AG04449 (cell line): ENCODE measurements at regions of chr4 and their contacts with region 1.

Region 1: DNA sequence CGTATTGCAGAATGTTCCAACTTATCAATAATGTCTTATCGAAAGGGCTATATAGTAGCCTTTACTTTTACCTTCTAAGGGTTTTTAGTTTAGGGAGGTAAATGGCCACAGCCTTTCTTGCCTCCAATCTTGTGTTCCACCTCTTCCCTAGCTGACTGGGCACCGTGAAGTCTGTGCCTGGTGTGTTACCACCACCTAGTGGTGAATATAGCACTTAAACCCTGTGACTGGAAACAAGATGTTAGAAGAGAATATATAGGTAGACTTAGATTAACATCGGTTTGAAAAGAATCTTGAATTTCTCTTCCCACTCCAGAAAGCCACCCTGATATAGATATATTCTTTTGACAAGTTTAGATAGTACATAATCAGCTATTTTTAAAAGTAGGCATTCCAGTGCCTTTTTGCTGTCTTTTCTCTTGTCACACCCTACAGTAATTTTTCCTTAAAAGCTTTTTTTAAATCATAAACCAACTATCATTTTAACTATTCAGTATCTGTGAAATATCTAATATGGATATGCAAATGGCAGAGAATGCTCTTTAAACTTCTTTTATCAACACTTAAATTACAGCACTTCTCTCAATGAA is 27.8 kb upstream of the ADH7 start:
- DNase-seq: no peak
- H3K4me3 ChIP-seq: no peak overlapping the region
- CTCF ChIP-seq: peak; percentile 67

Region 2: GRCh38 chr4:99117876-99118693 is 344.9 kb before region 1 on chr4:
- CTCF ChIA-PET with region 1: interaction called, 20 read pairs
- POLR2A ChIA-PET with region 1: no interaction called
- DNase-seq: no peak
- H3K4me3 ChIP-seq: no peak overlapping the region
- CTCF ChIP-seq: no peak

Region 3: GRCh38 chr4:99205153-99205979 is 257.6 kb before region 1 on chr4:
- CTCF ChIA-PET with region 1: interaction called, 16 read pairs
- POLR2A ChIA-PET with region 1: no interaction called
- DNase-seq: no peak
- H3K4me3 ChIP-seq: no peak overlapping the region
- CTCF ChIP-seq: no peak

Region 4: GRCh38 chr4:99447079-99447478 is 15.9 kb before region 1 on chr4:
- CTCF ChIA-PET with region 1: interaction called, 22 read pairs
- POLR2A ChIA-PET with region 1: no interaction called
- DNase-seq: peak; percentile 4
- H3K4me3 ChIP-seq: no peak overlapping the region
- CTCF ChIP-seq: no peak

Region 5: GRCh38 chr4:99473131-99473530 is 10.2 kb after region 1 on chr4:
- CTCF ChIA-PET with region 1: interaction called, 28 read pairs
- POLR2A ChIA-PET with region 1: no interaction called
- DNase-seq: no peak
- H3K4me3 ChIP-seq: no peak overlapping the region
- CTCF ChIP-seq: no peak

Region 6: GRCh38 chr4:99615170-99615820 is 152.3 kb after region 1 on chr4:
- CTCF ChIA-PET with region 1: no interaction called
- POLR2A ChIA-PET with region 1: no interaction called
- DNase-seq: no peak
- H3K4me3 ChIP-seq: no peak overlapping the region
- CTCF ChIP-seq: no peak